Activated naive CD4-positive, alpha-beta T cell treated with anti-CD3 and anti-CD28 coated beads for 36 hours (primary cell): ENCODE measurements at regions of chr13 and their contacts with region 1.

Region 1: GRCh38 chr13:91313103-91313502 is 34.4 kb upstream of the MIR17HG start:
- DNase-seq: peak; percentile 40
- H3K4me3 Mint-ChIP-seq: peak overlapping the region; percentile 39
- H3K27ac Mint-ChIP-seq: no peak overlapping the region
- H3K4me1 Mint-ChIP-seq: peaks cover 9% of the 10 kb centered on the region
- H3K27me3 Mint-ChIP-seq: peaks cover 2% of the 10 kb centered on the region

Region 2: GRCh38 chr13:91348906-91349435 is 35.9 kb after region 1 on chr13:
- CTCF ChIA-PET with region 1: interaction called, 10 read pairs
- intact Hi-C with region 1: loop called (anchors 1 kb)
- DNase-seq: peak; percentile 94
- H3K4me3 Mint-ChIP-seq: peak overlapping the region; percentile 95
- H3K27ac Mint-ChIP-seq: peak overlapping the region; percentile 91
- H3K4me1 Mint-ChIP-seq: peaks cover 45% of the 10 kb centered on the region
- H3K27me3 Mint-ChIP-seq: no peaks in the 10 kb centered on the region

Region 3: DNA sequence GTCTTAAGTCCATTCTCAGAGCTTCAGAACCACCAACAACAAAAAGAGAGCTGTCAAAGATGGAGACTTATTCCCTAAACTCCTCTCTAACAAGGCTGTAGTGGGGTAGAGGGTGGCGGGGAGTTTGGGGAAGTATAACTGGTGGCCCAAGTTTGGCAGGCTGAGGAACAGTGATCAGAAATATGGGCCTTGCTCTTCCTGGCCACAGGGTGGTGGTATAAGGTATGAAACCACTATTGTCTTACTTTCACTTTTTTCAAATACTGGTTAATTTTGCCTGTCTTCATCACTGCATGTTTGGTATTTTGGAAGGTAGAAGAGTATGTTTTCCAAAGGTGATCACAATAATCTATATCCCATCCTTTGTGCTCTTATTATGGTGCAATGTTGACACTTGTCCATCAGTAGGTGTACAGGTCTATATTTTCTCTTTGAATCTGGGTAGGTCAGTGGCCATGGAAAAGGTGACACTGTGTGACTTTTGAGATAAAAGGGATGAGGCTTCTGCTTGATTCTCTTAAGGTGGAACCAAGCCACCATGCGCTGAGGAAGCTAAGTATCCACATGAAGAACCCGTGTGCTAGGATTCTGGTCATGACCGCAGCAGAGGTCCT is 62.1 kb after region 1 on chr13:
- CTCF ChIA-PET with region 1: interaction called, 5 read pairs
- intact Hi-C with region 1: loop called (anchors 1 kb)
- DNase-seq: peak; percentile 31
- H3K4me3 Mint-ChIP-seq: no peak overlapping the region
- H3K27ac Mint-ChIP-seq: no peak overlapping the region
- H3K4me1 Mint-ChIP-seq: peaks cover 4% of the 10 kb centered on the region
- H3K27me3 Mint-ChIP-seq: peaks cover 5% of the 10 kb centered on the region

Region 4: DNA sequence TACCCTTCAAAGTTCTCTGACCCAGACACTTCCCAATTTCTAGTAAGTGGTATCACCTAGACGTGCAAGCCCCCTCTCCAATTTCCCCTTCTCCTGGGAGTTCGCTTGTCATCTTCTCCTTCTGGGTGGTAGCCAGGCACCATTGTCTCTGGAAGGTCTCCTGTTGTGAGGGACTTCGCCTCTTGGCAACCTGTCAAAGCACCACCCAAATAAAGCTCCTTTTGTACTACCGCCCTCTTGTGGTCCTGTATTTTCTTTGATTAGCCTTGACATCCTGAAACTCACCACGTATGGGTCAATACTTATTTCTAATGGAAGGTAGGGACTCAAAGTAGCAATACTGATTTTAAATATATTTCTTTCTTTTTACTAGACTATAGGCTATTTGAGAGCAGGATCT is 93.5 kb after region 1 on chr13:
- CTCF ChIA-PET with region 1: interaction called, 6 read pairs
- intact Hi-C with region 1: loop called (anchors 1 kb)
- DNase-seq: peak; percentile 24
- H3K4me3 Mint-ChIP-seq: no peak overlapping the region
- H3K27ac Mint-ChIP-seq: no peak overlapping the region
- H3K4me1 Mint-ChIP-seq: no peaks in the 10 kb centered on the region
- H3K27me3 Mint-ChIP-seq: peaks cover 11% of the 10 kb centered on the region

Region 5: GRCh38 chr13:91722267-91722884 is 409.3 kb after region 1 on chr13:
- CTCF ChIA-PET with region 1: interaction called, 3 read pairs
- intact Hi-C with region 1: loop called (anchors 1 kb)
- DNase-seq: no peak
- H3K4me3 Mint-ChIP-seq: no peak overlapping the region
- H3K27ac Mint-ChIP-seq: no peak overlapping the region
- H3K4me1 Mint-ChIP-seq: no peaks in the 10 kb centered on the region
- H3K27me3 Mint-ChIP-seq: peaks cover 2% of the 10 kb centered on the region